CD4-positive, alpha-beta memory T cell (primary cell): ENCODE measurements at regions of chr14 and their contacts with region 1.

Region 1: GRCh38 chr14:24241829-24242443 is 487 bp downstream of the TINF2 start:
- DNase-seq: peak; percentile 96 to 98 (median 97)
- H3K4me3 ChIP-seq: peak overlapping the region; percentile 79 to 81
- H3K4me3 Mint-ChIP-seq: peak overlapping the region; percentile 87 to 99 (median 94)
- H3K27ac ChIP-seq: peak overlapping the region; percentile 96
- H3K27ac Mint-ChIP-seq: peak overlapping the region; percentile 99 to 100 (median 99)
- H3K4me1 ChIP-seq: peaks cover 55% of the 10 kb centered on the region
- H3K4me1 Mint-ChIP-seq: peaks cover 35 to 77% (median 57%) of the 10 kb centered on the region in 4 donors
- H3K27me3 ChIP-seq: no peaks in the 10 kb centered on the region
- H3K27me3 Mint-ChIP-seq: no peaks in the 10 kb centered on the region

Region 2: DNA sequence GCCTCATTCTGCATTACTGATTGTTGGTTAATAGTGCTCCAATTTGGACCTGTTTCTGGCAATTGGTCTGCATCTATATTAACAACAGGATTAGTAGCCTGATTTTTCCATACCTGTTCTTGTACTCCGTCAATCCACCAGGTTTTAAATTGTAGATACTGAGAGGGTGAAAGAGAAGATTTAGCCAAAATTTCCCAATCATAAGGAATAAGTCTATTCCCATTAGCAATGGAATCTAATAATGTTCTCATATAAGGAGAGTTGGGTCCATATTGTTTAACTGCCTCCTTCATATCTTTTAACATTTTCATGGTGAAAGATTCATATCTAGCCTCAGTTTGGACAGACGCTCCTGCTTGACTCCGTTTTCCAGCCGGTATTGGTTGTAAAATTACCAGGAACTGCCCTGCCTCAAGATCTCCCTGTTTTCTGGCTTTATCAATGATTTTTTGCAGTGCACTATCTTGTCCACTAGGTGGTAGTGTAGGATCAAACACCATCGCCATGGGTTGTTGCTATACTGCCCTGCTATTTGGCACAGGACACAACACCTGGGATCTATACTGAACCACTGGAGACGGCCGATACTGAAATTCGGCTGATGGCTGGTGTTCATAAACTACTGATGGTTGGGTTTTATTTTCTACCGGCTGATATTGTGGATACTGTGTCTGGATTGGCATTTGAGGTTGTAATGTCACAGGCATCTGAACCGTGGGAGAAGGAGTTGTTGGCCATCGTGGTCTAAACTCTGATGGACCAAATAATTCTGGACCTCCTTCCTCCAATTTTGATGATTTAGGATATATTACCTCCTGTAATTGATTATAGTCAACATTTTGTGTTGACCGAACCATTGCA is 228.1 kb before region 1 on chr14:
- CTCF ChIA-PET with region 1: no interaction called
- POLR2A ChIA-PET with region 1: no interaction called
- intact Hi-C with region 1: loop called (anchors 2 kb)
- DNase-seq: peak; percentile 60 to 77 (median 70)
- H3K4me3 ChIP-seq: no peak overlapping the region
- H3K4me3 Mint-ChIP-seq: no peak overlapping the region
- H3K27ac ChIP-seq: no peak overlapping the region
- H3K27ac Mint-ChIP-seq: no peak overlapping the region
- H3K4me1 ChIP-seq: peaks cover 19% of the 10 kb centered on the region
- H3K4me1 Mint-ChIP-seq: peaks cover 19 to 27% (median 23%) of the 10 kb centered on the region in 4 donors
- H3K27me3 ChIP-seq: no peaks in the 10 kb centered on the region
- H3K27me3 Mint-ChIP-seq: peaks cover 0 to 3% of the 10 kb centered on the region in 2 donors

Region 3: GRCh38 chr14:24114536-24115450 is 127.1 kb before region 1 on chr14 and contains the starts of genes DCAF11 and NRL:
- CTCF ChIA-PET with region 1: interaction called, 7 read pairs
- POLR2A ChIA-PET with region 1: interaction called, 32 read pairs
- intact Hi-C with region 1: loop called (anchors 1 kb)
- DNase-seq: peak; percentile 100
- H3K4me3 ChIP-seq: peak within 1 kb of the TSS; percentile 97 to 98
- H3K4me3 Mint-ChIP-seq: peak within 1 kb of the TSS; percentile 95 to 99 (median 98)
- H3K27ac ChIP-seq: peak within 1 kb of the TSS; percentile 98
- H3K27ac Mint-ChIP-seq: peak within 1 kb of the TSS; percentile 98 to 100 (median 99)
- H3K4me1 ChIP-seq: peaks cover 29% of the 10 kb centered on the region
- H3K4me1 Mint-ChIP-seq: peaks cover 19 to 44% (median 30%) of the 10 kb centered on the region in 4 donors
- H3K27me3 ChIP-seq: no peaks in the 10 kb centered on the region
- H3K27me3 Mint-ChIP-seq: no peaks in the 10 kb centered on the region
- total RNA-seq, gene DCAF11: 71.5 to 75.8 TPM
- total RNA-seq, gene NRL: 2.9 to 4.5 TPM

Region 4: GRCh38 chr14:24188251-24189058 is 53.5 kb before region 1 on chr14 and contains the start of gene IPO4:
- CTCF ChIA-PET with region 1: interaction called, 12 read pairs
- POLR2A ChIA-PET with region 1: interaction called, 34 read pairs
- intact Hi-C with region 1: loop called (anchors 2 kb)
- DNase-seq: peak; percentile 92 to 98 (median 95)
- H3K4me3 ChIP-seq: peak within 1 kb of the TSS; percentile 31 to 90
- H3K4me3 Mint-ChIP-seq: peak within 1 kb of the TSS; percentile 90 to 96 (median 93)
- H3K27ac ChIP-seq: peak within 1 kb of the TSS; percentile 80
- H3K27ac Mint-ChIP-seq: peak within 1 kb of the TSS; percentile 93 to 96 (median 96)
- H3K4me1 ChIP-seq: peaks cover 23% of the 10 kb centered on the region
- H3K4me1 Mint-ChIP-seq: peaks cover 20 to 56% (median 36%) of the 10 kb centered on the region in 4 donors
- H3K27me3 ChIP-seq: no peaks in the 10 kb centered on the region
- H3K27me3 Mint-ChIP-seq: no peaks in the 10 kb centered on the region
- total RNA-seq, gene IPO4: 22.4 to 30.2 TPM

Region 5: DNA sequence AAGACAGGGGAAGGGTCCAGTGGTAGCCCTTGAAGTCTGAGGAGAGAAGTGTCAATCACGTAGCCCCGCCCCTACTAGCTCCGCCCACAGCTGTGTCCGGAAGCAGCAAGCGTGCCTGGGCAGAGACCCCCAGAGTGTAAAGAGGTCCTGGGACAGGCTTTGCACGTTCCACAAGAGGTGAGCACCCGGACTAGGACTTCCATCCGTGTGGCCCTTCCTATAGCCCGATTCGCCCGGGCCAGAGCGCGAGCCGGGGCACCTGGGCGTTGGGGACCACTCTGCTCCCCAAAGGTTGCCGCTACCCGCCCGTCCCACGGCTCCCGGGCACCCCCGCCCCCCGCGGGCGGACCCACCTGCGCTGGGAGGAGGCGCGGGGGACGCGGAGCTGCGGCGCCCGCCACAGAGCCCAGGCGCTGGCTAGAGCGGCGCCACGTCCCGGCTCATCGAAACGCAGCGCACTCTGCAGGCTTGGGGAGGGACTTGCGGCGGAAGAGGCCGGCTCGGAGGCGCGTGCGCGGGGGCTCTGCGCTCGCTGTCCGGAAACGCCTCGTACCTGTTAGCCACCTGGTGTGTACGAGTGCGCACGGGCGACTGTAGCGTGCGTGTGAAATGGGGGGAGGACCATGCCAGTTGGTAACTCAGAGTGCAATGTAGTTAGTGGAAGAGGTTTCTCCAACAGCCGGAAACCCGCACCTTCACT is 29.3 kb after region 1 on chr14 and contains the start of gene RABGGTA:
- CTCF ChIA-PET with region 1: interaction called, 84 read pairs
- POLR2A ChIA-PET with region 1: interaction called, 128 read pairs
- intact Hi-C with region 1: loop called (anchors 1 kb)
- DNase-seq: peak; percentile 95 to 98 (median 97)
- H3K4me3 ChIP-seq: peak within 1 kb of the TSS; percentile 86 to 91
- H3K4me3 Mint-ChIP-seq: peak within 1 kb of the TSS; percentile 90 to 95 (median 91)
- H3K27ac ChIP-seq: peak within 1 kb of the TSS; percentile 94
- H3K27ac Mint-ChIP-seq: peak within 1 kb of the TSS; percentile 91 to 100 (median 99)
- H3K4me1 ChIP-seq: peaks cover 33% of the 10 kb centered on the region
- H3K4me1 Mint-ChIP-seq: peaks cover 24 to 46% (median 39%) of the 10 kb centered on the region in 4 donors
- H3K27me3 ChIP-seq: no peaks in the 10 kb centered on the region
- H3K27me3 Mint-ChIP-seq: no peaks in the 10 kb centered on the region
- total RNA-seq, gene RABGGTA: 55.6 to 62.5 TPM

Region 6: GRCh38 chr14:24310646-24311604 is 69.0 kb after region 1 on chr14 and contains the start of gene LTB4R:
- CTCF ChIA-PET with region 1: interaction called, 556 read pairs
- POLR2A ChIA-PET with region 1: interaction called, 108 read pairs
- intact Hi-C with region 1: loop called (anchors 1 kb)
- DNase-seq: peak; percentile 73 to 79 (median 77)
- H3K4me3 ChIP-seq: peak within 1 kb of the TSS; percentile 55 to 58
- H3K4me3 Mint-ChIP-seq: peak within 1 kb of the TSS; percentile 83 to 94 (median 88)
- H3K27ac ChIP-seq: peak within 1 kb of the TSS; percentile 72
- H3K27ac Mint-ChIP-seq: peak within 1 kb of the TSS; percentile 90 to 97 (median 95)
- H3K4me1 ChIP-seq: peaks cover 71% of the 10 kb centered on the region
- H3K4me1 Mint-ChIP-seq: peaks cover 58 to 89% (median 72%) of the 10 kb centered on the region in 4 donors
- H3K27me3 ChIP-seq: no peaks in the 10 kb centered on the region
- H3K27me3 Mint-ChIP-seq: no peaks in the 10 kb centered on the region
- total RNA-seq, gene LTB4R: 19.5 to 20.0 TPM

Region 7: GRCh38 chr14:24442273-24443052 is 200.5 kb after region 1 on chr14 and contains the start of gene SDR39U1:
- CTCF ChIA-PET with region 1: interaction called, 30 read pairs
- POLR2A ChIA-PET with region 1: interaction called, 32 read pairs
- intact Hi-C with region 1: loop called (anchors 1 kb)
- DNase-seq: peak; percentile 95 to 99 (median 98)
- H3K4me3 ChIP-seq: peak within 1 kb of the TSS; percentile 73 to 85
- H3K4me3 Mint-ChIP-seq: peak within 1 kb of the TSS; percentile 87 to 97 (median 92)
- H3K27ac ChIP-seq: peak within 1 kb of the TSS; percentile 93
- H3K27ac Mint-ChIP-seq: peak within 1 kb of the TSS; percentile 93 to 99 (median 99)
- H3K4me1 ChIP-seq: peaks cover 27% of the 10 kb centered on the region
- H3K4me1 Mint-ChIP-seq: peaks cover 20 to 57% (median 41%) of the 10 kb centered on the region in 4 donors
- H3K27me3 ChIP-seq: no peaks in the 10 kb centered on the region
- H3K27me3 Mint-ChIP-seq: no peaks in the 10 kb centered on the region
- total RNA-seq, gene SDR39U1: 102 to 109 TPM